Motor neuron (in vitro differentiated cells): ENCODE measurements at regions of chr19 and their contacts with region 1.

Region 1: DNA sequence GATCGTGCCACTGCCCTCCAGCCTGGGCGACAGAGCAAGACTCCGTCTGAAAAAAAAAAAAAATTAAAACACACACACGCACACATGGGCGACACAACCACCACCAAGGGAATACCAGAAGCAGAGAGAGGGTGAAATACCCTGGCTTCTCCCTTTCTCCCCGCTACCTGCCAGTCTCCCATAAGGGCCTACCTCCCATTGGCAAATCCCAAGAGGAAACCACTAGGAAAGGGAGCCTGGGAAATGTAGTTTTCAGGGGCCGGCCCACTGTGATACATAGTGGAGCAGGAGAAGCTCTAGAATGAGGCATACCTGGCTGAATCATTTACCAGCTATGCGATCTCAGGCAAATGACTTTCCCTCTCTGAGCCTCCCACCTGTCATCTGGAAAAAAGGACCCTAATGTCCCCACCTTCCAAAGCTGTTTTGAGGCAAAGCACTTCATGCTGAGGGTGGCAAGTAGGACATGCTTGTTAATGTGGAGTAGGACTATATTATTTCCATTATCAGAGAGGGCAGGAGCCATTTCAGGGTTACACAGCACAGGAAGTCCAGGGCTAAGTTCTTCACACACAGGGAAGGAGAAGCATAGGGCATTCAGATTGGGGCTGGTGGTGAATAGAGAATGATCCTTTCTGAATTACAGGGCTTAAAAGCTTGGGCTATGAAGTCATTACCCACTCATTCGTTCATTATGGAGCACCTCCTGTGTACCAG is 14.3 kb upstream of the HNRNPUL1 start:
- ATAC-seq: no peak
- H3K4me3 ChIP-seq: no peak overlapping the region
- H3K27ac ChIP-seq: no peak overlapping the region
- H3K4me1 ChIP-seq: no peaks in the 10 kb centered on the region

Region 2: DNA sequence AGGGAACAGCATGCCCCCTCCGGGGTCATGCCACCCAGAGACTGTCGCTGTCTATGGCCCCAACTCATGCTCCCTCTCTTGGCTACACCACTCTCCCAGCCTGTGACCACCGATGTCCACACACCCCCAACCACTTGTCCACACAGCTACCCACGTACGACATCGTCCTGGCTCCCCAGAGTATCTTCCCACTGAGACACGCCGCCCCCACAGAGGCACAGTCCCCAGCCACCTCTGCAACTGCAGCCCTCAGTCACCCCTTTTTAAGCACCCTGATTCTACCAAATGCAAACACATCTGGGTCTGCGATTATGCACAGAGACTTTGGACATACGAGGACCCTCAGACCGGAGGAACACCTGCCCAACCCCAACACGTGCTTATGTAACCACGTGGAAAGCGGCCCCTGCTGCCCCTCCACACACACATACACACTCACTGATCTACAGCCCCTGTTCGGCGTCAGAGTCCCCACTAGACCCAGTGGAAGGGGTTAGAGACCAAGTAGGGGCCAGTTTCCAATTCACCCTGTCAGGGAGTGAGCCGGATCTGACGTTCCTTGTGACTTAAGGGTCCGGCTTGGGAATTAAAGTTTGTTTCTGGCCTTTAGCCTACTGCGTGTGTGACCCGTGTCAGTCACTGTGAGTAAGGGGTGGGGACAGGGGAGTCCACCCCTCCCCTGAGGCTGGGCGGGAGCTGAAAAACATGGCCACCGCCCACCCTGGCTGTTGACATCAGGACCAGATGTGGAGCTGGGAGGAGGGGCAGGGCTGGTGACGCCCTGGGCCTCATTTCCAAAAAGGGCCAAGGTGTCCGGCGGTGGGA is 42.7 kb before region 1 on chr19:
- in situ Hi-C with region 1: loop called in 1 of 9 experiments (anchors 10 kb)
- ATAC-seq: peak in 3 of 8 experiments; percentile 69 to 92 (median 87)
- H3K4me3 ChIP-seq: no peak overlapping the region
- H3K27ac ChIP-seq: no peak overlapping the region
- H3K4me1 ChIP-seq: no peaks in the 10 kb centered on the region